ENCODE measurements at regions of chr16 and their contacts with region 1.

Region 1: GRCh38 chr16:50806099-50807062 is 64.5 kb downstream of the CYLD start:
- DNase-seq: peak; percentile 90
- H3K4me3 Mint-ChIP-seq: peak overlapping the region; percentile 61
- H3K27ac Mint-ChIP-seq: no peak overlapping the region
- H3K4me1 Mint-ChIP-seq: no peaks in the 10 kb centered on the region
- H3K27me3 Mint-ChIP-seq: no peaks in the 10 kb centered on the region
- CTCF ChIP-seq: peak; percentile 78

Region 2: DNA sequence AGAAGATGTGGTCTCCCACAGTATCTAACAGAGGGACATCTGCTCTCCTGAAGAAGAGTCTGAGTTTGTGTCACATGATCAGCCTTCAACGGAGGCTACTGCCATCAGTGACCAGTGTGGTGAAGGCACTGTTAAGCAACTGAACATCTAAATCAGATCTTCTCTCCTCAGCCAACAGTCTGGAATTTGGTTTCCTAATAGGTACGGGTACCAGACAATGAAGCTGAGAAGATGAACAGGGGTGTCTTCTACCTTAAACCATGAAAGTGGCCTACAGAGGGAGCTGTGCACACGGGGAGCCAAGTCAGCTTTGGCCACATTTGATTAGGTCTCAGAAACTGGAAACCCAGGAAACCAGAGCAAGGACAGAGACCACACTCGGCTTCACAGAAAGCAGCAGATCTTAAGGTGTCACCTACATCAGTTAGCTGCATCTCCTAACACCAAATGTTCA is 479.4 kb before region 1 on chr16:
- CTCF ChIA-PET with region 1: interaction called, 7 read pairs
- POLR2A ChIA-PET with region 1: no interaction called
- intact Hi-C with region 1: loop called (anchors 1 kb)
- DNase-seq: peak; percentile 54
- H3K4me3 Mint-ChIP-seq: no peak overlapping the region
- H3K27ac Mint-ChIP-seq: no peak overlapping the region
- H3K4me1 Mint-ChIP-seq: no peaks in the 10 kb centered on the region
- H3K27me3 Mint-ChIP-seq: no peaks in the 10 kb centered on the region
- CTCF ChIP-seq: peak; percentile 29

Region 3: GRCh38 chr16:50671644-50672260 is 134.6 kb before region 1 on chr16:
- CTCF ChIA-PET with region 1: interaction called, 68 read pairs
- POLR2A ChIA-PET with region 1: no interaction called
- intact Hi-C with region 1: loop called (anchors 1 kb)
- DNase-seq: peak; percentile 62
- H3K4me3 Mint-ChIP-seq: no peak overlapping the region
- H3K27ac Mint-ChIP-seq: no peak overlapping the region
- H3K4me1 Mint-ChIP-seq: no peaks in the 10 kb centered on the region
- H3K27me3 Mint-ChIP-seq: no peaks in the 10 kb centered on the region
- CTCF ChIP-seq: peak; percentile 84

Region 4: GRCh38 chr16:50771366-50771765 is 35.0 kb before region 1 on chr16:
- CTCF ChIA-PET with region 1: interaction called, 12 read pairs
- POLR2A ChIA-PET with region 1: no interaction called
- intact Hi-C with region 1: no loop called
- DNase-seq: no peak
- H3K4me3 Mint-ChIP-seq: no peak overlapping the region
- H3K27ac Mint-ChIP-seq: no peak overlapping the region
- H3K4me1 Mint-ChIP-seq: no peaks in the 10 kb centered on the region
- H3K27me3 Mint-ChIP-seq: no peaks in the 10 kb centered on the region
- CTCF ChIP-seq: no peak

Region 5: GRCh38 chr16:50830698-50831097 is 24.3 kb after region 1 on chr16:
- CTCF ChIA-PET with region 1: interaction called, 45 read pairs
- POLR2A ChIA-PET with region 1: no interaction called
- intact Hi-C with region 1: no loop called
- DNase-seq: peak; percentile 40
- H3K4me3 Mint-ChIP-seq: no peak overlapping the region
- H3K27ac Mint-ChIP-seq: peak overlapping the region; percentile 57
- H3K4me1 Mint-ChIP-seq: no peaks in the 10 kb centered on the region
- H3K27me3 Mint-ChIP-seq: no peaks in the 10 kb centered on the region
- CTCF ChIP-seq: no peak

Region 6: DNA sequence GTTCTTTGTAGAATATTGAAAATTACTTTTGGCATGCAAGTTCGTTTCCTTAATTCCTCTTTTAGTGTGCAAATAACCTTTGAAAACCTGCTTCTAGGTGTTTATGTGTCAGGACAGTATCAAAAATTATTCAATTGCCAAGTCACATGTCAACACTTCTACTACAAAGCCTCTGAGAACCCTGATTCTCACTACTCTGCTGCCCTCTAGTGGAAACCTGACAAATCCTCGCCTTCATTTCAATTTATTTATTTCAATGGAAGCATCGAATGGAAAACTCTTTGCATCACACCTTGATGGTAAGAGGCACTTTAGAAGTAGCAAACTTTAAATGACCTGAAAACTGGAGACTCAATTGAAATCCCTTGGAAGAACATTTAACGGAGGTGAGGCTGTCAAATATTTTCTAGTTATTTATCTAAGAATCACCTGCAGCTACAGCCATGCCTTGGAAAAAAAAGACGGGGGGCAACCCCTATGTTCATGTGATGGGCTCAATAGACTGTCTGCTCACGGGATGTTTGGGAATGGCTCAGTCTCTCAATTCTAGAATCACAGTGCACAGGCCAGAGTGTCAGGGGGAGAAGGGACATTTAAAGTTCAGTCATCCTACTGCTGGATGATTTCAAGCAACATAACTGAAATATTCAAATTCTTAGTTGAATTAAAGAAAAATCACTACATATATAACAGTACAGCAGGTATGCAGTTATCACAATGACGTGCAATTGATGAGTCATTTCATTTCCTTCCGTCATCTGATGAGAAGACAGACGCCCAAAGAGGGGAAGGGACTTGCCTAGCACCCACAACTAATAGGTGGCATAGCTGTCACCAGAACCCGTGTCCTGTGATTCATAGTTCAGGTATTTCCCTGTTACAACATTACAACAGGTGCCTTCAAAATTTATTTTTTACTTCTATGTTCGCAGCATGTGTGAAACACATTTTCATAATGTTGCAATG is 1176.6 kb after region 1 on chr16:
- CTCF ChIA-PET with region 1: interaction called, 12 read pairs
- POLR2A ChIA-PET with region 1: no interaction called
- intact Hi-C with region 1: no loop called
- DNase-seq: peak; percentile 76
- H3K4me3 Mint-ChIP-seq: no peak overlapping the region
- H3K27ac Mint-ChIP-seq: no peak overlapping the region
- H3K4me1 Mint-ChIP-seq: peaks cover 6% of the 10 kb centered on the region
- H3K27me3 Mint-ChIP-seq: no peaks in the 10 kb centered on the region
- CTCF ChIP-seq: peak; percentile 60

Measured in MCF 10A (cell line).